Mammary epithelial cell (primary cell): ENCODE measurements at regions of chr2 and their contacts with region 1.

Region 1: DNA sequence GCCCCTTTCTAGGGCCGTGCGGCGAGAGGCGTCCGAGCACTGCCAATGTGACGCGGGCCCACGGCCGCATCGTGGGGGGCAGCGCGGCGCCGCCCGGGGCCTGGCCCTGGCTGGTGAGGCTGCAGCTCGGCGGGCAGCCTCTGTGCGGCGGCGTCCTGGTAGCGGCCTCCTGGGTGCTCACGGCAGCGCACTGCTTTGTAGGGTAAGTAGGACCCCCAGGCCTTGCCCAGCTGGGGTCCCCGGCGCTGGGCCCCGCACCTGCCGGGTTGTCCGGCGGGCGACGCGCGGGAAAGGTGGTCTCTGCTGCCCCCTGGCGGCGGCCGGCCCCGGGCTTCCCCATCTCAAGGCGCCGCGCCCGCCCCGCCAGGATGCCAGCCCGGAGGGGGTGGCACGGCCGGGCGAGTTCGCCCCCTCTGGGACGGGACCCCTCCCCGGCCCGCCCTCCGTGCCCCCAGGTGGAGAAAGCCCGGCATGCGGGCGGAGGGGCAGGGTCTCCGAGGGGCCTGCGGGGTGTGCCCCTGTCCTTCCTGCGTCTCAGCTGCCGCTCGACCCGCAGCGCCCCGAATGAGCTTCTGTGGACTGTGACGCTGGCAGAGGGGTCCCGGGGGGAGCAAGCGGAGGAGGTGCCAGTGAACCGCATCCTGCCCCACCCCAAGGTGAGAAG is 1.9 kb downstream of the PRSS56 start:
- DNase-seq: no peak
- H3K4me3 ChIP-seq: no peak overlapping the region
- H3K27ac ChIP-seq: no peak overlapping the region
- H3K4me1 ChIP-seq: peaks cover 17% of the 10 kb centered on the region
- H3K27me3 ChIP-seq: peaks cover 28% of the 10 kb centered on the region
- CTCF ChIP-seq: peak; percentile 30 to 62

Region 2: DNA sequence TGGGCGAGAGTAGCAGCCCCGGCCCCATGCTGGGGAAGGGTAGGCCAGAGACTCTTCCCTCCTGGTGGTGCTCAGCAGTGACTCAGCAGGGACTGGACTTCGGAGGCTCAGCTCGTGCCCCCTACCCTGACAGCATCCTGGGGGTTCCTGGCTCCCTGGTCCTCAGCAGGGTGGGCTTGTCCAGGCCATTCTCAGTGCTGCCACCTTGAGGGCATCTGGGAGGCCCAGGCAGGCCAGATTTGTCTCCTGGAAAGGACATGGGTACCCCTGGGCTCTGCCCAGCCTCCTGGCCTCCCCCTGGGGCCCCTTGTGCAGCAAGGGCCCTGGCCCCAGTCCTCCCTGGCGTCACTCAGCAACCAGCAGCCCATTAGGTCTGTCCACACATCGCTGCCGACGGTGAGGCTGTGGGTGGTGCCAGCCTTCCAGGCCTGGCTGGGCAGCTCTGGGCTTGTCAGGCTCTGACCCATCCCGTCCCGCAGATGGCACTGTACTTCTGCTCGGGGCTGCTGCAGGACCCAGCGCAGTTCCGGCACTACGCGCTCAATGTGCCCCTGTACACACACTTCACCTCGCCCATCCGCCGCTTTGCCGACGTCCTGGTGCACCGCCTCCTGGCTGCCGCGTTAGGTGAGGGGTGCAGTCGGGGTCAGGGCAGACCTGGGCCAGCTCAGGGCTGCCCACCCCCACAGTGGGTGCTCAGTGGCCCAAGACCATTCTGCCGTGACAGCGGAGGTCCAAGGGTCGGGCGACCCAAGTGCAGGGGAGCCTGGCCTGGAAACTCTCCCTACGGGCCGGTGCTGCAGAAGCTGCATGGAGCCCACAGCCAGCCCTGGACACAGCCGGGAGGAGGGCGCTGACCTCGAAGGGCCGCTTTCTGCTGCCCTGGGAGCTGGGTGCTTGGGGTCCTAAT is 188.5 kb before region 1 on chr2:
- CTCF ChIA-PET with region 1: no interaction called
- dilution Hi-C with region 1: no loop called
- in situ Hi-C with region 1: no loop called
- intact Hi-C with region 1: loop called (anchors 2 kb)
- DNase-seq: peak; percentile 73
- H3K4me3 ChIP-seq: no peak overlapping the region
- H3K27ac ChIP-seq: no peak overlapping the region
- H3K4me1 ChIP-seq: peaks cover 16% of the 10 kb centered on the region
- H3K27me3 ChIP-seq: no peaks in the 10 kb centered on the region
- CTCF ChIP-seq: peak; percentile 29 to 56

Region 3: GRCh38 chr2:232444409-232445148 is 77.5 kb before region 1 on chr2:
- CTCF ChIA-PET with region 1: no interaction called
- dilution Hi-C with region 1: no loop called
- in situ Hi-C with region 1: no loop called
- intact Hi-C with region 1: loop called (anchors 2 kb)
- DNase-seq: peak; percentile 54
- H3K4me3 ChIP-seq: no peak overlapping the region
- H3K27ac ChIP-seq: no peak overlapping the region
- H3K4me1 ChIP-seq: no peaks in the 10 kb centered on the region
- H3K27me3 ChIP-seq: no peaks in the 10 kb centered on the region
- CTCF ChIP-seq: peak; percentile 75 to 80

Region 4: DNA sequence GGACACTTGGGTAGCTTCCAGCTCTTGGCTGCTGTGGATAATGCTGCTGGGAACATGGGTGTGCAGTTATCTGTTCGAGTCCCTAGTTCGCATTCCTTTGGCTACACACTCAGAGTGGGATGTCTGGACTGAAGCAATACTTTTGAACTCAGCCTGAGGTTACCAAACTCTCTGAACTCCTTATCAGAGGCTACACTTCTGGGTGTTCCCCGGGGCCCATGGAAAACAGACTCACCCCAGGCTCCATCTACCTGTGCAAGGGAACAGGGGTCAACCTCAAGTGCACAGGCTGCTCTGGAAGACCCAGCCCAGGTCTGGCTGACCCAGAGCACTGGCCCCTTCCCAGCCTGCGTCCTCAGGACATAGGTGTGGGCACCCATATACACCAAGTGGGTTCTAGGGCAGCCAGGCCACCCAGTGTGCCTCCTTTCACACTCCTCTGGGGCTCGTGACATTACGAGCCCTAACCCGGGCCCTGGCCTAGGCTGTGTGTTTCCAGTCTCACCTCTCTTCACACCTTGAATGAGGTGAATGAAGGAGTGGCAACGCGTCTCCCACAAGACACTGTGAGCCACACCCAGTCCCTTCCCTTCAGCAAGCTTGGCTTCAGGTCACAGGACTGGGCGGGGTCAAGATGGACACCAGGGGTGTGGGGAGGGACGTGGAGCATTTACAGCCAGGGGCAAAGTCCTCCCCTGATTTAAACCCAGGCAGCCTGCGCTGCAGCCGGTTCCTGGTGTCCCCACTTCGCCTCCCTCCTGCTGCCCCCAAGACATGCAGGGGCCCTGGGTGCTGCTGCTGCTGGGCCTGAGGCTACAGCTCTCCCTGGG is 66.5 kb before region 1 on chr2 and contains the start of gene ALPI:
- CTCF ChIA-PET with region 1: no interaction called
- dilution Hi-C with region 1: no loop called
- in situ Hi-C with region 1: loop called in 1 of 2 experiments (anchors 10 kb)
- intact Hi-C with region 1: no loop called
- DNase-seq: no peak
- H3K4me3 ChIP-seq: no peak within 1 kb of the TSS
- H3K27ac ChIP-seq: no peak within 1 kb of the TSS
- H3K4me1 ChIP-seq: no peaks in the 10 kb centered on the region
- H3K27me3 ChIP-seq: peaks cover 1% of the 10 kb centered on the region
- CTCF ChIP-seq: no peak
- total RNA-seq, gene ALPI: not detected